IMR-90 (cell line): ENCODE measurements at regions of chr3 and their contacts with region 1.

Region 1: GRCh38 chr3:159273608-159274007 is 471.8 kb downstream of the MFSD1 start:
- DNase-seq: peak; percentile 43
- ATAC-seq: peak; percentile 79
- H3K4me3 ChIP-seq: no peak overlapping the region
- H3K27ac ChIP-seq: no peak overlapping the region
- H3K4me1 ChIP-seq: no peaks in the 10 kb centered on the region
- H3K27me3 ChIP-seq: no peaks in the 10 kb centered on the region
- CTCF ChIP-seq: no peak
- POLR2A ChIP-seq: no peak
- RAD21 ChIP-seq: no peak

Region 2: GRCh38 chr3:159586571-159587202 is 313.1 kb after region 1 on chr3:
- CTCF ChIA-PET with region 1: no interaction called
- POLR2A ChIA-PET with region 1: no interaction called
- dilution Hi-C with region 1: no loop called
- in situ Hi-C with region 1: loop called (anchors 10 kb)
- intact Hi-C with region 1: no loop called
- DNase-seq: peak; percentile 63
- ATAC-seq: peak; percentile 91
- H3K4me3 ChIP-seq: no peak overlapping the region
- H3K27ac ChIP-seq: no peak overlapping the region
- H3K4me1 ChIP-seq: peaks cover 2% of the 10 kb centered on the region; the same call in 1 of the 2 replicates
- H3K27me3 ChIP-seq: peaks cover 4% of the 10 kb centered on the region
- CTCF ChIP-seq: peak; percentile 63
- POLR2A ChIP-seq: no peak
- RAD21 ChIP-seq: peak; percentile 75